ENCODE measurements at regions of chr6 and their contacts with region 1.

Region 1: DNA sequence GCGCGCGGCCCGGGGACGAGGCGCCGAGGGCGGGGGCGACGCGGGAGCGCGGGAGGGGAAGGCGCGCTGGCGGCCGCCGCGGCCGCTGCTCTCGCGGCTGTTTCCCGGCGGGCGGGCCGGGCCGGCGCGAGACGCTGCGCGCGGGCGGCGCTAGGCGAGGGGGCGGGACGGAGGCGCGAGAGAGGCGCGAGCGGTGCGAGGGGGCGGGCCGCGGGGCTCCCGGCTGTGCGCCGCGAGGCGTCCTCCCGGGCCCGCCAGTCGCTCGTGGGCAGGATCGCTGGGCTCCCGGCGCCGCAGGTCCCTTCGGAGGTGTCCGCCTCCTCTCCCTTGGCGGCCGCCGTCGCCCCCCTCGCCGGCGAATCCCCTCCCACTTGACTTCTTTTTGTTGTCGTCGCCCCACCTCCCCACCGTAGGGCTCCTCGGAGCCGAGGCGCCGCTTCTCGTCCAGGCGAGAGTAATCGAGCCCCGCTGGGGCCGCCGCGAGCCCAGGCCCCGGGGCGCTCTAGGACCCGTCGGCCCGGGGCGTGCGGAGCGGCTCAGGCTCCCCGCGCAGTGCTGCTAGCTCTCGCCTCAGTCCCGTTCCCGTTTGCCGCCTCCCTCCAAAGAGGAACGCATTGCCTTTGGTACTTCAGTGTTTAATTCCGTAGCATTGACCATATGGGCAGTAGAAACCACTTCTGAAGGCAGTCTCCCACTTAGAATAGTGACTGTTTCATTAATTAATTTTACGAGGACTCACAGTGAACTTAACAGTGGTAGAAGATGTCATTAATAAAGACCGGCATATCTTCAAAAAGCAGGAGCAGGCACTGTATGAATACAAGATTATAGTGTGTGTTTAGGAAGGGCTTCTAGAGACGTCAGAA is at the start of gene RANBP9:
- DNase-seq: peak; percentile 90
- ATAC-seq: peak; percentile 94 to 95
- total RNA-seq, gene RANBP9: 27.3 to 33.1 TPM

Region 2: GRCh38 chr6:13614926-13615798 is 96.8 kb before region 1 on chr6 and contains the start of gene NOL7:
- intact Hi-C with region 1: loop called in 1 of 2 experiments (anchors 10 kb)
- DNase-seq: peak; percentile 99
- ATAC-seq: peak; percentile 97
- total RNA-seq, gene NOL7: 41.4 to 50.5 TPM

Region 3: DNA sequence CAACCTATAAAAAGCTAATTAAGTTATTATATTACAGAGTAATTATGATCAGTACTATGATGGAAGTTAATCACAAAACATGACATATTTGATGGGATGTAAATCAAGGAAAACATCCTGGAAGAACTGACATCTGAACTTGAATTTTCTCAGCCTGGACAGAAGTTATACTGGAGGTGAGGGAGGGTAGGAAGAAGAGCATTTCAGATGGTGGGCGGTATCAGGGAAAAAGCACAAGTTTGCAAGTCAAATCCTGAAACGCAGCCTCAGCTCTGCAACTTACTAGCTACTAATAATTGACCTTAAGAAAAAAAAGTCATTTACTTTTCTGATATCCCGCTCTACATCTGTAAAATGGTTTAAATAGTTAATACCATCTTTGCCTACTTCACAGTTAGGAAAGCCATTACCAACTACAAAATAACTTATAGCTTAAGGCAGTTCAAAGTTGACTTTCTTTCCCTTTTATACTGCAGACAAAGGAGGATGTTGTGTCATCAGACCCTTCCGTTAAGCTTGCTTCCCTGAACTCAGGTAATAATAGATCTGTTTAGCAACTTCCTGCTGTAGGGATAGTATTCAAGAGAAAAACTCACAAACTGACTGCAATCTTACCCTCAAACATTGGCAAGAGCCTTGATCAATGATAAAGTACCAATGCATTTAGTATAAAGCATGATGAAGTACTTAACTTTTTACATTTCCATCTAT is 75.9 kb before region 1 on chr6:
- intact Hi-C with region 1: loop called in 1 of 2 experiments (anchors 10 kb)
- DNase-seq: no peak
- ATAC-seq: no peak

Region 4: GRCh38 chr6:13733178-13733887 is 21.4 kb after region 1 on chr6:
- intact Hi-C with region 1: loop called in 1 of 2 experiments (anchors 1 kb)
- DNase-seq: peak; percentile 61
- ATAC-seq: peak; percentile 90 to 91

Measured in left cardiac atrium (tissue), 4 donors.